ENCODE measurements at regions of chr3 and their contacts with region 1.

Region 1: DNA sequence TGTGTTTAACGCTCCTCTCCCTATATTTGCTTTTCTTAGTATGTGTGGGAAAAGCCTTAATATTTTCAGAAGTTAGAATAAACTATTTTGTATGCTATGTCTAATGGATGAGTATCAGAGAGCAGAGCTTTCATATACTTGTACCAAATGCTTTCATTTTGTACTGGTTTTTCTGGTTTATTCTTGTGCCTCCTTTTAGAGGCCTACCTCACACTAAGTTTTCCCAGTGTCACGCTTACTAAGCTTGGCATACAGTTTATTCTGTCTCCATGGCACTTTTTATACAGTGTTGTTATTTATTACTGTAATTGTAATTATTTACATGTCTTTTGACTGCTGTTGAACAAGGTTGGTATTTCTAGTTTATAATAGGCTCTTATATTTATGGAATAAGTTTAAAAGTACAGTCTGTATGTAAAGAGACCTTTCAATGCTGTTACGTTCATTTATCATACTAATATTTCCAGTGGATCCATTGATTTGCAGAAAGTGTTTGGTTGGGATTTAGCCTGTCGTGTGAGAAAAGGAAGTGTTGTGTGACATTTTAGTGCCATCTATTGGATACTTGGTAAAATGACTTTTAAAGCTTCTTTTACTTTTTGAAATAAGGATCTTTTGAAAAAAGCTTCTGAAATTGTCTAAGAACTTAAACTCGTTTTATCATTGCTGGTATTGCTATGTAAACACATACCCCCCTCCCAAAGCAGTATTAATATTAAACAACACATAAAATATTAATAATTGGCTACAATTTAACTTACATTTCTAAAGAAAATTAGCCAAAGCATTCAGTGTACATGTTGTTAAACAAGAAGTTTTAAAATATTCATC is 5.2 kb upstream of the EBLN2 start:
- DNase-seq: no peak
- ATAC-seq: no peak
- H3K4me3 Mint-ChIP-seq: no peak overlapping the region
- H3K27ac Mint-ChIP-seq: no peak overlapping the region
- H3K4me1 Mint-ChIP-seq: peaks cover 26% of the 10 kb centered on the region
- H3K27me3 Mint-ChIP-seq: no peaks in the 10 kb centered on the region
- CTCF ChIP-seq: peak; percentile 65

Region 2: GRCh38 chr3:72847751-72848702 is 208.2 kb before region 1 on chr3 and contains the start of gene SHQ1:
- CTCF ChIA-PET with region 1: interaction called, 17 read pairs
- POLR2A ChIA-PET with region 1: no interaction called
- intact Hi-C with region 1: no loop called
- DNase-seq: peak; percentile 98
- ATAC-seq: peak; percentile 90
- H3K4me3 Mint-ChIP-seq: peak within 1 kb of the TSS; percentile 89
- H3K27ac Mint-ChIP-seq: peak within 1 kb of the TSS; percentile 84
- H3K4me1 Mint-ChIP-seq: peaks cover 51% of the 10 kb centered on the region
- H3K27me3 Mint-ChIP-seq: no peaks in the 10 kb centered on the region
- CTCF ChIP-seq: no peak
- total RNA-seq, gene SHQ1: 29.8 to 31.4 TPM

Region 3: GRCh38 chr3:72949016-72949415 is 107.2 kb before region 1 on chr3:
- CTCF ChIA-PET with region 1: interaction called, 13 read pairs
- POLR2A ChIA-PET with region 1: no interaction called
- intact Hi-C with region 1: no loop called
- DNase-seq: no peak
- ATAC-seq: no peak
- H3K4me3 Mint-ChIP-seq: no peak overlapping the region
- H3K27ac Mint-ChIP-seq: no peak overlapping the region
- H3K4me1 Mint-ChIP-seq: peaks cover 23% of the 10 kb centered on the region
- H3K27me3 Mint-ChIP-seq: no peaks in the 10 kb centered on the region
- CTCF ChIP-seq: no peak

Region 4: DNA sequence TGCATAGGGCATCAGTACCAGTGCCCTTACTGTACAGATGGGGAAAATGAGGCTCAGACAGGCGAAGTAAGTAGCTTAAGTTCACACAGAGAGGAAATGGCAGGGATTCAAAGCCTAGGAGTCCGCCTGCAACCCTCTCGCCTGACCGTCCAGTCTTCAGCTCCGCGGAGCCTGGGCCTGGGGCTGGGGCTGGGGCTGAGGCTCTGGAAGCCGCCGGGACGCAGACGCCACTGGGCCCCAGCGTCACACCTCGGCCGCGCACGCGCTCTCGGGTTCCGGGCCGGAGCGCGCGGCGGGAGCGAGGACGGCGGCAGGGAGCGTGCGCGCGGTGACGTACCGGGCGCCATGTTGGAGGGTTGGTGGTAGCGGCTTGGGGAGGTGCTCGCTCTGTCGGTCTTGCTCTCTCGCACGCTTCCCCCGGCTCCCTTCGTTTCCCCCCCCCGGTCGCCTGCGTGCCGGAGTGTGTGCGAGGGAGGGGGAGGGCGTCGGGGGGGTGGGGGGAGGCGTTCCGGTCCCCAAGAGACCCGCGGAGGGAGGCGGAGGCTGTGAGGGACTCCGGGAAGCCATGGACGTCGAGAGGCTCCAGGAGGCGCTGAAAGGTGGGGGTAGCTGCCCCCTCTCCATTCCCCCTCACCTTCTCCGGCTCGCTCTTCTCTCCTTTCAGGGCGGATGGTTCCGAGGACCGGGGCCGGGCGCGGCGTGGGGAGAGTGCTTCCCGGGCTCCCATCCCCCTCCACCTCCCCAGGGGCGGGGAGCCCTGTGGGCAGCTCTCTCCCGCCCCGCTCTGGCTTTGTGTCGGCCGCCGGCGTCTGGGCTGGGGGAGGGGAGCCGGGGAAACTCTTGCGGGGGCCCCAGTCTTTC is 59.5 kb before region 1 on chr3 and contains the start of gene PPP4R2:
- CTCF ChIA-PET with region 1: interaction called, 15 read pairs
- POLR2A ChIA-PET with region 1: interaction called, 3 read pairs
- intact Hi-C with region 1: no loop called
- DNase-seq: peak; percentile 91
- ATAC-seq: peak; percentile 89
- H3K4me3 Mint-ChIP-seq: peak within 1 kb of the TSS; percentile 88
- H3K27ac Mint-ChIP-seq: peak within 1 kb of the TSS; percentile 97
- H3K4me1 Mint-ChIP-seq: peaks cover 34% of the 10 kb centered on the region
- H3K27me3 Mint-ChIP-seq: no peaks in the 10 kb centered on the region
- CTCF ChIP-seq: no peak
- total RNA-seq, gene PPP4R2: 85.5 to 88.6 TPM

Region 5: DNA sequence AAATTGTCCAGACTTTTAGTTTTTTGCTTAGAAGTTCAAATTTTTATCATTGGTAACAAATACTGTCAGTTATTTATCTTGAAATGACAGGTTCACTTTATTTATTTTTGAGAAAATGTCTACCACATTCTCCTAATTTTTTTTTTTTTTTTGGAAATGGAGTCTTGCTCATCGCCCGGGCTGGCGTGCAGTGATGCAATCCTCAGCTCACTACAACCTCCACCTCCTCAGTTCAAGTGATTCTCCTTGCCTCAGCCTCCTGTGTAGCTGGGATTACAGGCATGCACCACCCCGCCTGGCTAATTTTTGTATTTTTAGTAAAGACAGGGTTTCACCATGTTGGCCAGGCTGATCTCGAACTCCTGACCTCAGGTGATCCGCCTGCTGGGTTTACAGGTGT is 10.8 kb before region 1 on chr3:
- CTCF ChIA-PET with region 1: interaction called, 24 read pairs
- POLR2A ChIA-PET with region 1: no interaction called
- intact Hi-C with region 1: no loop called
- DNase-seq: no peak
- ATAC-seq: no peak
- H3K4me3 Mint-ChIP-seq: no peak overlapping the region
- H3K27ac Mint-ChIP-seq: no peak overlapping the region
- H3K4me1 Mint-ChIP-seq: peaks cover 54% of the 10 kb centered on the region
- H3K27me3 Mint-ChIP-seq: no peaks in the 10 kb centered on the region
- CTCF ChIP-seq: no peak

Region 6: DNA sequence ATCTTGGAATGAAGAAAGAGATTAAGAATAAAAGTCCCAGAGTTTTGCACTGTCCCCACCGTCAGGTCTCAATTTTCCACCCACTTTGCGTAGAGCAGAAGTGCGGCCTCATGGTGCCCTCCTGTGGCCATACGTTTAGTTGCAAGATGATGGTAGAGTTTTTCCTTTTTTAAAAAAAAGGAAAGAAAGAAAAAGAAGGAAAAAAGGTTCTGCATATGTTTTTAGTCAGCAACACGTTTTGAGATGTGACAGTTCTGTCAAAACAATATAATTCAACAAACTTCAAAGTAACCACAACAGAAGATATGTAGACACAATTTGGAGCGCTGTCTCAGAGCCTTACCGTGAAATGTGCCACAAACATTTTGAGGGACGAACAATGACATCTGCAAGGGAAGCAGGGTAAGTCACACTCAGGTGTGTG is 29.9 kb after region 1 on chr3:
- CTCF ChIA-PET with region 1: interaction called, 31 read pairs
- POLR2A ChIA-PET with region 1: no interaction called
- intact Hi-C with region 1: no loop called
- DNase-seq: peak; percentile 64
- ATAC-seq: peak; percentile 67
- H3K4me3 Mint-ChIP-seq: no peak overlapping the region
- H3K27ac Mint-ChIP-seq: no peak overlapping the region
- H3K4me1 Mint-ChIP-seq: peaks cover 8% of the 10 kb centered on the region
- H3K27me3 Mint-ChIP-seq: no peaks in the 10 kb centered on the region
- CTCF ChIP-seq: peak; percentile 94